Activated CD8-positive, alpha-beta T cell treated with anti-CD3 and anti-CD28 coated beads for 36 hours (primary cell): ENCODE measurements at regions of chr18 and their contacts with region 1.

Region 1: GRCh38 chr18:70195852-70196434 is 9.5 kb downstream of the RTTN start:
- DNase-seq: peak; percentile 30
- ATAC-seq: peak; percentile 48
- H3K4me3 Mint-ChIP-seq: no peak overlapping the region
- H3K27ac Mint-ChIP-seq: no peak overlapping the region
- H3K4me1 Mint-ChIP-seq: peaks cover 36% of the 10 kb centered on the region
- H3K27me3 Mint-ChIP-seq: no peaks in the 10 kb centered on the region
- CTCF ChIP-seq: peak; percentile 65

Region 2: DNA sequence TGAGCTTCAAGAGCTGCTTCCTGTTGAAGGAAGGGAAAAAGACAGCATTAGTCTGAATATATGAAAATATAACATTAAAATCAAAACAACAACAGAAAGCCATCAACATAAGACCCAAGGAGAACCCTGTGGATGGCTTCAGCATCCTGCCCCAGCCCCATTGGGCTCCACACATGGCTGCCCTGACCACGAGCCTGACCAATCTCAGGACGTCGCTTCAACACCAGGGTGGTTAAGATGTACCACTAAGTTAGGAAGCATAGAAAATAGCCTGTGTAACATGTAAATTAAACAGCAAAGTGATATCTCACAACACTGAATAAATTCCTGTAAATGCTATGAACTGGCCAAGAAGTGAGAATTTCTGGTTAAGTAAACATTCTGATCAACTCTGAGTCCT is 171.1 kb before region 1 on chr18:
- CTCF ChIA-PET with region 1: no interaction called
- POLR2A ChIA-PET with region 1: no interaction called
- intact Hi-C with region 1: no loop called
- DNase-seq: no peak
- ATAC-seq: no peak
- H3K4me3 Mint-ChIP-seq: no peak overlapping the region
- H3K27ac Mint-ChIP-seq: no peak overlapping the region
- H3K4me1 Mint-ChIP-seq: no peaks in the 10 kb centered on the region
- H3K27me3 Mint-ChIP-seq: no peaks in the 10 kb centered on the region
- CTCF ChIP-seq: no peak

Region 3: GRCh38 chr18:70172225-70172624 is 23.7 kb before region 1 on chr18:
- CTCF ChIA-PET with region 1: interaction called, 13 read pairs
- POLR2A ChIA-PET with region 1: no interaction called
- intact Hi-C with region 1: no loop called
- DNase-seq: no peak
- ATAC-seq: no peak
- H3K4me3 Mint-ChIP-seq: no peak overlapping the region
- H3K27ac Mint-ChIP-seq: no peak overlapping the region
- H3K4me1 Mint-ChIP-seq: no peaks in the 10 kb centered on the region
- H3K27me3 Mint-ChIP-seq: no peaks in the 10 kb centered on the region
- CTCF ChIP-seq: no peak

Region 4: DNA sequence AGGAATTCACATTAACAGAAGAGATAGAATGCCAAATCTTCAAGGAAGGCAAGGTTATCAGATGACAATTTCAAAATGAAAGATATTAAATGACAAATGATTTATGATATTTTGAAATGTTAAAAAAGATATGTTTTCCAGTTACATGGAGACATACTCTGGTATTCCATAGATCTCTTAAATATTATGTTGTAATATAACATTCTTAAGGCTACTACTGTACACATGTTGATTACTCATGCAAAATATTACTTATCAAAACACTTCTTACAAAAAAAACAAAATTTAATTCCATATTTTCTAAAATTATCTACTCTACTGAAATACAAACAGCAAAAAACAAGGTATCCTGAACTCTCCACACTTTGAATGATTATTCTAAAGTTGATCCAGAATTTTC is 13.4 kb before region 1 on chr18:
- CTCF ChIA-PET with region 1: interaction called, 20 read pairs
- POLR2A ChIA-PET with region 1: no interaction called
- intact Hi-C with region 1: no loop called
- DNase-seq: no peak
- ATAC-seq: no peak
- H3K4me3 Mint-ChIP-seq: no peak overlapping the region
- H3K27ac Mint-ChIP-seq: no peak overlapping the region
- H3K4me1 Mint-ChIP-seq: peaks cover 12% of the 10 kb centered on the region
- H3K27me3 Mint-ChIP-seq: no peaks in the 10 kb centered on the region
- CTCF ChIP-seq: no peak

Region 5: GRCh38 chr18:70289351-70290330 is 93.7 kb after region 1 on chr18:
- CTCF ChIA-PET with region 1: no interaction called
- POLR2A ChIA-PET with region 1: no interaction called
- intact Hi-C with region 1: loop called (anchors 10 kb)
- DNase-seq: peak; percentile 6
- ATAC-seq: peak; percentile 38
- H3K4me3 Mint-ChIP-seq: peak overlapping the region; percentile 76
- H3K27ac Mint-ChIP-seq: peak overlapping the region; percentile 63
- H3K4me1 Mint-ChIP-seq: peaks cover 5% of the 10 kb centered on the region
- H3K27me3 Mint-ChIP-seq: peaks cover 38% of the 10 kb centered on the region
- CTCF ChIP-seq: no peak

Region 6: DNA sequence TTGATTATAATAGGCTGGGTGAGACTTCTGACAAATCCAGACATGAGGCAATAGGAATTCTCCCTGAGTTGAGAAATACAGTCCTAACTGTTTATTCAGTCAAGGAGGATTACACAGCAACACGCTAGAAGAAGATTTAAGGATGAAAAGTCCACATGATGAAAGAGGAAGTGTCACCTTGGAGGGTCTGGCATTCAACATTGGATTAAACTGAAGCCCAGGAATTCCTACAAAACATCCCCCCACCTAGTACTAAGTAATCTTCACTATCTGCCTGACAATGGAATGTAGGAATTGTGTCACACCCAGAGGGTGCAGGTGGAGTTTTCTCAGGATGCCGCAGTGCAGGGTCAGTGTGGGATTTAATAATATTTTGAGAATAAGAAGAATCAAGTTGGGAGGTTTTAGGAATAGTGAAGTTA is 235.3 kb after region 1 on chr18:
- CTCF ChIA-PET with region 1: interaction called, 40 read pairs
- POLR2A ChIA-PET with region 1: no interaction called
- intact Hi-C with region 1: loop called (anchors 5 kb)
- DNase-seq: no peak
- ATAC-seq: no peak
- H3K4me3 Mint-ChIP-seq: no peak overlapping the region
- H3K27ac Mint-ChIP-seq: no peak overlapping the region
- H3K4me1 Mint-ChIP-seq: no peaks in the 10 kb centered on the region
- H3K27me3 Mint-ChIP-seq: no peaks in the 10 kb centered on the region
- CTCF ChIP-seq: no peak

Region 7: DNA sequence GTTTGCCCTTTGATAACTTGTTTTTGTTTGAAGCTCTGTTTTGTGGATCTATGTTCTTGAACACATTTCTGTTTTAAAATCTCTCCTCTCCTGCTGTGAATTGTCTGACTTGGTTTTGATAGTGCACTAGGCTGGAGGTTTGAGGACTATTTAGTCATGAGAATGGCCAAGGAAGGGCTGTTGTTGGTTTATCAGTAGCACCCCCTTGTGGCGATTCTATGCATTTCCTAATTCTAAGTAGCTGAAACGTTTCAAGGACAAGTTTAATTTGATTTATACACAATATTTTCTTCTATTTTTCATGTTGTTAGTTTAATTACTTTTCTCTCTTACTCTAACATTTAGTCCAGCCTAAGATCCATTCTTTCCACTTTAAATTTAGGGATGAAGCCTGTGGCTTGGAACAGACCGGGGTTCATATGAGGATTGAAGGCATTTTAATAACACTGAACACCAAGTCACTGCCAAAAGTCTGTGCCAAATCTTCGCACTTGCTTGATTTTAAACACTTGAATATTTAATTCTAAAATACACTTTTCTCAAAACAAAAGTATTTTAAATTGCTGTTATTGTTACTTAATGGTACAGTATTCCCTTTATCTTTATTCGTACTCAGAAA is 258.9 kb after region 1 on chr18:
- CTCF ChIA-PET with region 1: interaction called, 38 read pairs
- POLR2A ChIA-PET with region 1: no interaction called
- intact Hi-C with region 1: loop called (anchors 5 kb)
- DNase-seq: peak; percentile 39
- ATAC-seq: peak; percentile 64
- H3K4me3 Mint-ChIP-seq: no peak overlapping the region
- H3K27ac Mint-ChIP-seq: no peak overlapping the region
- H3K4me1 Mint-ChIP-seq: no peaks in the 10 kb centered on the region
- H3K27me3 Mint-ChIP-seq: peaks cover 1% of the 10 kb centered on the region
- CTCF ChIP-seq: peak; percentile 81